ENCODE measurements at regions of chr16 and their contacts with region 1.

Region 1: GRCh38 chr16:9123871-9124270 is 32.4 kb downstream of the HAPSTR1 start:
- DNase-seq: peak; percentile 86 to 96 (median 93)
- H3K4me3 ChIP-seq: peak overlapping the region in 1 of 3 experiments; percentile 0
- H3K4me3 Mint-ChIP-seq: peak overlapping the region in 1 of 2 donors; percentile 42
- H3K27ac ChIP-seq: peak overlapping the region; percentile 26 to 73
- H3K27ac Mint-ChIP-seq: peak overlapping the region; percentile 80 to 95 (median 86)
- H3K4me1 ChIP-seq: peaks cover 32 to 44% of the 10 kb centered on the region in 2 donors
- H3K4me1 Mint-ChIP-seq: peaks cover 57% of the 10 kb centered on the region
- H3K27me3 ChIP-seq: no peaks in the 10 kb centered on the region
- H3K27me3 Mint-ChIP-seq: peaks cover 0 to 2% (median 0%) of the 10 kb centered on the region in 3 donors
- CTCF ChIP-seq: no peak

Region 2: DNA sequence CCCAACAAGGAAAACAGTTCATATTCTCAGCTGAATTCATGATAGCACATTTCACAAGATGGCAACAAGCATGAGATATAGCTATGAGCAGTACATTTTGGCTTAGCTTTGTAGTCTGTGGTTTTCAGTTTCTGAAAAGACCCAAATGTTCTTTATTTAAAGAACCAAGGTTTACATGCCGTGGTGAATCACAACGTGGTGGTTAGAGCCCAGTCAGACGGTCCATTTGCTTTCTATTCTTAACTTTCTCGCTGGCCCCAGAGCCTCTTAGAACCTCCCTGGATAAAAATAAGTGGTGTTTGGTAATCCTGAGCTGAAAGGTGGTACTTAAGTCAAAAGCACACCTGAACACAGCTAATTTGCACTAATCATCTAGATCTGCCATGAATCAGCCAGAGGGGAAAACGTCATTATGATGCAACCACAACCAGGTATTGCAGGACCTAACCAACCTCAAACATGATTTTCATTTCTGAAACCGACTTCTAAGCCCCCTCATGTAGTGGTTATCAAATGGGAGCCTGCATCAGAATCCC is 51.0 kb before region 1 on chr16:
- intact Hi-C with region 1: no loop called
- DNase-seq: no peak
- H3K4me3 ChIP-seq: no peak overlapping the region
- H3K4me3 Mint-ChIP-seq: no peak overlapping the region
- H3K27ac ChIP-seq: no peak overlapping the region
- H3K27ac Mint-ChIP-seq: no peak overlapping the region
- H3K4me1 ChIP-seq: peaks cover 14 to 17% of the 10 kb centered on the region in 2 donors
- H3K4me1 Mint-ChIP-seq: peaks cover 23% of the 10 kb centered on the region
- H3K27me3 ChIP-seq: no peaks in the 10 kb centered on the region
- H3K27me3 Mint-ChIP-seq: peaks cover 4% of the 10 kb centered on the region in 3 donors
- CTCF ChIP-seq: no peak

Region 3: DNA sequence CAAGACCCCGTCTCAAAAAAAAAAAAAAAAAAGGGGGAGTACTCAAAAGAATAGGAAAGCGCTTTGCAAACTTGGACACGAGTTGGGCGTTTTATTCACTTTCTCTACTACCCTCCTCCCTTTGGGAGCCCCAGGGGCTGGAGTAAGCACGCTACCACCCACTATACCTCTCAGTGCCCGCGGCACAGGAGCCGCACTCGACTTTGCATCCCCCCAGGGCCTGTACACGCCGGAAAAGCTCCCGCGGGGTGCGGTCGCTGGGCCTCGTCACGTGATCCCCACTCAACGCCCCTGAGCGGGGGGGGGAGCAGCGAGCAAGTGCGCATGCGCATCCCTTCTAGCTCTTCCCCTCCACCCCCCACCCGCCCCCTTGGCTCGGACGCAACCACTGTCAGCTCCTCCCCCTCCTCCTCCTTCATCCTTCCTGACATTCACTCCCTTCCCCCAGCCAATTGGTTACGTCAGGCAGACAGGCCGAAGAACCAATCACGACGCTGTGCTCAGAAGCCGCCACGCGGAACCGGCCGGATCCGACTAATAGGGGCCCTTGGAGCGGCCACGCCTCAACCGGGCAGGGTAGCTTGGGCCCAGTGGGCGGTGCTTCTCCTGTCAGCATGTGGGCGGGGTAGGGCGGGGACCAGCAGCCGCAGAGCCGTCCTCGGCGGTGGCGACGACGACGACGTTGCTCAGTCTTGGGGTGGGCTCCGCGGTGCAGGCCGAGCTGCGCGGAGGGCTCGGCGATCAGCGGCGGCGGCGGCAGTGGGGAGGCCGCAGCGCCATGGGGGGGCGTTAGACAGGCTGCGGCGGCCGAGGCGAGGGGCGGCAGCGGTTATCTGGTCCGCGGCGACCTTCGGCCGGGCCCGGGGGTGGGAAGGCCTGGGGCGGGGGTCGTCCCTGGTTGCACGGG is 32.7 kb before region 1 on chr16 and contains the start of gene HAPSTR1:
- intact Hi-C with region 1: loop called in 1 of 2 experiments (anchors 5 kb)
- DNase-seq: peak; percentile 100
- H3K4me3 ChIP-seq: peak within 1 kb of the TSS; percentile 76 to 100 (median 98)
- H3K4me3 Mint-ChIP-seq: peak within 1 kb of the TSS; percentile 99
- H3K27ac ChIP-seq: peak within 1 kb of the TSS; percentile 91 to 93
- H3K27ac Mint-ChIP-seq: peak within 1 kb of the TSS; percentile 93 to 99 (median 97)
- H3K4me1 ChIP-seq: peaks cover 36 to 44% of the 10 kb centered on the region in 2 donors
- H3K4me1 Mint-ChIP-seq: peaks cover 23% of the 10 kb centered on the region
- H3K27me3 ChIP-seq: no peaks in the 10 kb centered on the region
- H3K27me3 Mint-ChIP-seq: peaks cover 0 to 4% (median 2%) of the 10 kb centered on the region in 3 donors
- CTCF ChIP-seq: no peak
- polyA plus RNA-seq, gene HAPSTR1: 7.2 to 58.9 (median 11.1) TPM

Region 4: DNA sequence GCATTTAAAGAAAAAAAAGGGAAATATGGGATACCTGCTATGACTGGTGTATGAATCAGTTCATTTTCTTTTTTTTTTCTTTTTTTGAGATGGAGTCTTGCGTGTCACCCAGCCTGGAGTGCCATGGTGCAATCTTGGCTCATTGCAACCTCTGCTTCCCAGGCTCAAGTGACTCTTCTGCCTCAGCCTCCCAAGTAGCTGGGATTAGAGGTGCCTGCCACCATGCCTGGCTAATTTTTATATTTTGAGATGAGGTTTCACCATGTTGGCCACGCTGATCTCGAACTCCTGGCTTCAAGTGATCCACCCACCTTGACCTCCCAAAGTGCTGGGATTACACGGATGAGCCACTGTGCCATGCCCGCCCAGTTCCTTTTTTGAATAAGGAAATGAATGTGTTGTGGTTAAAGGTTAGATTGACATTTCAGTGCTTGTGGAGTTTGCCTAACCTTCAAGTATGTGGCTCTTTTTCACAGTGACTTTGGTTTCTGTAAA is 24.7 kb before region 1 on chr16:
- intact Hi-C with region 1: loop called (anchors 2 to 5 kb)
- DNase-seq: peak; percentile 70 to 86 (median 79)
- H3K4me3 ChIP-seq: peak overlapping the region in 1 of 3 experiments; percentile 57
- H3K4me3 Mint-ChIP-seq: peak overlapping the region; percentile 70 to 82
- H3K27ac ChIP-seq: peak overlapping the region; percentile 76 to 91
- H3K27ac Mint-ChIP-seq: peak overlapping the region; percentile 93 to 98 (median 97)
- H3K4me1 ChIP-seq: peaks cover 91 to 97% of the 10 kb centered on the region in 2 donors
- H3K4me1 Mint-ChIP-seq: peaks cover 84% of the 10 kb centered on the region
- H3K27me3 ChIP-seq: no peaks in the 10 kb centered on the region
- H3K27me3 Mint-ChIP-seq: peaks cover 0 to 2% (median 0%) of the 10 kb centered on the region in 3 donors
- CTCF ChIP-seq: no peak